ENCODE measurements at regions of chr13 and their contacts with region 1.

Region 1: GRCh38 chr13:73708393-73708985 is 425.7 kb downstream of the KLF12 start:
- DNase-seq: peak; percentile 77
- H3K4me3 ChIP-seq: no peak overlapping the region
- H3K27ac ChIP-seq: no peak overlapping the region
- H3K4me1 ChIP-seq: no peaks in the 10 kb centered on the region
- H3K27me3 ChIP-seq: no peaks in the 10 kb centered on the region
- CTCF ChIP-seq: peak; percentile 65

Region 2: DNA sequence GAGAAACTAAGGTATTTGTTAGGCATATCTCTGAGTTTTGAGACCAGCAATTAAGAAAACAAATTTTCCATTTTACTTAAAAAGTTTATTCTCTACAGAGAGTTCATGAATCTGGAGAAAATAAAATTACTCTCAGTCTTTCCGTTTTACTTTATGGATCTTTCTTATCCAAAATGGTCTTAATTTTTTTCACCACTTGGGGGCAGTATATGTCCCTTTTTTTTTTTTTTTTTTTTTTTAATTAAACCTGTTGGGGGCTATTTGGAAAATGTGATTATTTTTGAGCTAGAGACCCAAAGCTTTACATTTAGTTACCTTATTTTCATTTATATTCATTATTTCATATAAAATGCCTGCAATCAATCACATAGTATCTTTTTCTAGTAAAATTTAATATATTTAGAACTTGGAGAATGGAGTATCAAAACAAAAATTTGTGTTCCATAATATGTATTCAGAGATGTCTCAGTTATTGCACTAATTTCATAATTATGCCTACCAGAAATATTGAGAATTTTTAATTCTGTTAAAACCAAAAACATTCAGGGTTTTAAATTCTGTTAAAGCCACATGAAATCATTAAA is 899.5 kb before region 1 on chr13:
- intact Hi-C with region 1: loop called (anchors 5 kb)
- DNase-seq: no peak
- H3K4me3 ChIP-seq: no peak overlapping the region
- H3K27ac ChIP-seq: no peak overlapping the region
- H3K4me1 ChIP-seq: no peaks in the 10 kb centered on the region
- H3K27me3 ChIP-seq: no peaks in the 10 kb centered on the region
- CTCF ChIP-seq: peak; percentile 60

Region 3: GRCh38 chr13:73198991-73199411 is 509.5 kb before region 1 on chr13:
- intact Hi-C with region 1: loop called (anchors 10 kb)
- DNase-seq: no peak
- H3K4me3 ChIP-seq: no peak overlapping the region
- H3K27ac ChIP-seq: peak overlapping the region; percentile 46
- H3K4me1 ChIP-seq: no peaks in the 10 kb centered on the region
- H3K27me3 ChIP-seq: no peaks in the 10 kb centered on the region
- CTCF ChIP-seq: no peak

Measured in colonic mucosa (tissue), 4 donors.